Common myeloid progenitor, CD34-positive (primary cell): ENCODE measurements at regions of chr11 and their contacts with region 1.

Region 1: DNA sequence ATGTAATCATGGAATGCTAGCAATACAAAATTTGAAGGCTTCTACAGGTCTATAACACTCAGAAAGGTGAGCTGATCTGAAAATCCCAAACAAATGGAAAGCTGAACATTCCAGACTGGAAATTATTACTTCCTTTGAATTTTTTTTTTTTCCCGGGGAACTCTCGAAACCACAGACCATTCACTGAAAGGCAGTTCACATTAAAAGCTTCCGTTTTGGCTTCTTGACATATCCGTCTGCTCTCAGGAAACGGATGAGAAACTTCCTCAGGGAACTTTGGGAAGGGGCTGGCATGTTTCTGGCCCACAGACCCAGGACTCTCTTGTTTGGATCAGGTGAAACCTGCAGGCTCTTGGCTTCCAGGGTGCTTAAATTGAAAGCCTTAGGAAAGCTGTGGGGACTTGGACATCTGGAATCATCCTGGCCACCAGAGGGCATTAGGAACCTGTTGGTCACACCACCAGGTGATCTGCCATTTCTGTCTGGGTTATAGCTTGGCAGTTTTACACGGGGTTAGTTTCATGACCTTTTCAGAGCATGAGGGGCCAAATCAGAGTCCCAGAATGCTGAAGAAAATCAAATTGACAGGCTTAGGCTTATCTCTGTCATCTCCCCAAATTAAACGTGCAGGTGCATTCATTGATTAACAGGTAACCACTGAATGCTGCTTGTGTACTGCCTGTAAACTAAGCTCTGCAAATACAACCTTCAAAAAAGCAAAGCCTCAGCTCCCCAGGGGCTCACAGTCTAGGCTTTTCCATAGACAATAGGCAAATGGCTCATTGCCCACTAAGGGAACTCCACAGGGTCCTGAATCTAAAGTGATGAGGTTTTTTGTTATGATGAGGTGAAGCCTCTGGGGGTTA is 22.7 kb upstream of the GRAMD1B start:
- DNase-seq: peak; percentile 76 to 85 (median 78)
- H3K4me3 ChIP-seq: peak overlapping the region in 1 of 7 experiments; percentile 2
- H3K27ac ChIP-seq: no peak overlapping the region
- H3K4me1 ChIP-seq: peaks cover 0 to 10% (median 3%) of the 10 kb centered on the region in 4 experiments
- H3K27me3 ChIP-seq: peaks cover 0 to 7% (median 0%) of the 10 kb centered on the region in 5 experiments

Region 2: DNA sequence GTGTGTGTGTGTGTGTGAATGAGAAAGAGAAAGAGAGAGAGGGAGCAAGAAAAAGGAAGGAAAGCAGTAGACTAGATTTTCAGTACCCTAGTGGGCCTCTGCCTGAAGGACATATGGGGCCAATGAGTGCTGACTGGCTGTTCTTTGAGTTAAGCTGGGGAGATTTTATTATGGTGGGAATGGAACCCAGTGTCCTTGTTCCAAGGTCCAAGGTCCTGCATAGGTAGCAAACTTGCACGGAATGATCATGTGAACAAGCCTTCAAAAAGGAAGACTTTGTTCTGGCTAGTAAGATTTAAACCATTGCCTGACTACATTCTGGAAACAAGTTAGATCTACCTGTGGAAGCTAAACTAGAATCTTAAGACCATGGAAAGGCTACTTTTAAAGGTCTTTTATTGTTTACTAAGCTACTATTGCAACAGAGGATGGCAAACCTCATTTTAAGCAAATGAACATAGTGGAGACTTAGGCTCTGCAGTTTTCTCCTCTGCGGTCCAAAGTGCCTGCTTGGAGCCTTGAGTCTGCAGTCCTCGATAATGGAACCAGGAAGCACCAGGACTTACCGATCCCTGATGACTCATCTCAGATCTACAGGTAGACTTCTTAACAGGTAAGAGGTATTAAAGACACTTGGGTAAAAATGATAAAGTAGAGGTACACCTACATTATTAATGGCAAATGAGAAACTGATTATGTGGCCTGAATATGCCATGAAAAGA is 12.5 kb after region 1 on chr11:
- CTCF ChIA-PET with region 1: interaction called, 31 read pairs
- POLR2A ChIA-PET with region 1: no interaction called
- DNase-seq: no peak
- H3K4me3 ChIP-seq: no peak overlapping the region
- H3K27ac ChIP-seq: no peak overlapping the region
- H3K4me1 ChIP-seq: peaks cover 0 to 16% (median 8%) of the 10 kb centered on the region in 4 experiments
- H3K27me3 ChIP-seq: peaks cover 0 to 2% (median 0%) of the 10 kb centered on the region in 5 experiments

Region 3: GRCh38 chr11:123430721-123431497 is 23.5 kb after region 1 on chr11:
- CTCF ChIA-PET with region 1: interaction called, 17 read pairs
- POLR2A ChIA-PET with region 1: no interaction called
- DNase-seq: peak; percentile 69 to 89 (median 87)
- H3K4me3 ChIP-seq: peak overlapping the region; percentile 57 to 86 (median 75)
- H3K27ac ChIP-seq: peak overlapping the region in 1 of 2 experiments; percentile 38
- H3K4me1 ChIP-seq: peaks cover 3 to 32% (median 19%) of the 10 kb centered on the region in 4 experiments
- H3K27me3 ChIP-seq: no peaks in the 10 kb centered on the region

Region 4: DNA sequence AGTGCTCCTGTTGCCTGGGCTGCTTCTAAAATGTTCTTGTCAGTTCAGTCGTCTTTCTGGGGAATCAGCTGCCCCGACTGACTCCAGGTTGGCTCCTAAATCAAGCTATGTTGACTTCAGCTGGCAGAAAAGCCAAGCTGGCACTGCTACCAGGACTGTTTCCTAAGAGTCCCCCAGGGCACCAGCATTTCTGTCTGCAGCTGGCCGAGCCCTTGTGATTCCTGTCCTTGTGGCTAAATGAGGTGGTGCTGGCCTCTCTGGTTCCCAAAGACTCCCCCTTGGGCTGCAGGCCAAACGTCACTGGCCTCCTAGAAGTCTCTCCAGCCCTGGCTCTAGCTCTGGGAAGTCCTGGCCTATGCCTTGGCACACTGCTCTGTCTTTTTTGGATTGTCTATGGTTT is 53.8 kb after region 1 on chr11:
- CTCF ChIA-PET with region 1: interaction called, 12 read pairs
- POLR2A ChIA-PET with region 1: no interaction called
- DNase-seq: no peak
- H3K4me3 ChIP-seq: no peak overlapping the region
- H3K27ac ChIP-seq: no peak overlapping the region
- H3K4me1 ChIP-seq: peaks cover 5 to 17% (median 12%) of the 10 kb centered on the region in 4 experiments
- H3K27me3 ChIP-seq: no peaks in the 10 kb centered on the region

Region 5: DNA sequence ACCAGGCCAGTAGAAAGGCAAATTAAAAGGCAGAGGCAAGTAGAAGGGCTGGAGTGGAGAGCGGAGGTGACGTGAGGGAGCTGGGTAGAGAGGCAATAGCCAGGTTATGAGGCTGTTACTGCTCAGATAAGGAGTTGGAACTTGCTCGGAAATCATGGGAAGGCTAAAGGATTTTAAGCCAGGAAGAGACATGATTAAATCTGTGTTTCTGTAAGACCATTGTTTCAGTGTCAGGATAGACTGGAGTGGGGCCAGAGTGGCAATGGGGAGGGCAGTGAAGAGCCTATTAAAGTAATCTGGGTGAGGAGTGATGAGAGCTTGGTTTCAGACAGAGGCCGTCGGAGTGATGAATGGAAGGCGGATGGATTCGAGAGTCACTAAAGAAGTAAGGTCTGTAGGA is 61.7 kb after region 1 on chr11:
- CTCF ChIA-PET with region 1: interaction called, 190 read pairs
- POLR2A ChIA-PET with region 1: no interaction called
- DNase-seq: no peak
- H3K4me3 ChIP-seq: no peak overlapping the region
- H3K27ac ChIP-seq: no peak overlapping the region
- H3K4me1 ChIP-seq: peaks cover 0 to 1% (median 0%) of the 10 kb centered on the region in 4 experiments
- H3K27me3 ChIP-seq: no peaks in the 10 kb centered on the region

Region 6: DNA sequence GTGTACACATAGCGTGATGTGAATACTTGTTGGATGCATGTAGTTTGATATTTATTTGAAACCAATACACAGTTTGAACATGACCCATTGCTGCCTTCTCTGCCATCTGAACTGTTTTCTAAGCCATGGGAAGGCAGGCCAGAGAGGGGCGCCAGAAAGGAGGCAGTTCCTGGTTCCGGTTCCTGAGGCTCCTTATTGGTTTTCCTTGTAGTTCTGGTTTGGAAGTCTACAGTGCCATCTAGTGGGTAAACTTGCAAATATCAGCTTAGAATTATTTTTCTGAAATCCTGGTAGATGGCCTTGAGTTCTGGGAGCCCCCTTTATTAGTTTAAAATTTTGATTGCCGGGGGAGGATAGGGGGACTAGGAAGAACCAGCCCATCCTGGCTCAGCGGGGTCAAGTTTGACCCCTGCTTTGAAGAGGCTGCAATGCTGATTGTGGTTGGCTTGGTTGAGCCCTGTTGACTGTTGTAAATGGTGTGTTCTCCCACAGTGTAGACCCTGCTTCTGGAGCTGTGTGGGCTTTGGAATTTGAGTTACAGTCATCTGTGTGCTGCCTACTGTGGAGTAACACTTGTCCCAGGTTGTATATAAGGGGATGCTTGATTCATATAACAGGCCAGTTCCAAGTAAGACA is 71.1 kb after region 1 on chr11:
- CTCF ChIA-PET with region 1: interaction called, 190 read pairs
- POLR2A ChIA-PET with region 1: no interaction called
- DNase-seq: peak; percentile 63 to 75 (median 74)
- H3K4me3 ChIP-seq: peak overlapping the region in 3 of 7 experiments; percentile 8 to 48 (median 23)
- H3K27ac ChIP-seq: no peak overlapping the region
- H3K4me1 ChIP-seq: peaks cover 12 to 68% (median 12%) of the 10 kb centered on the region in 4 experiments
- H3K27me3 ChIP-seq: no peaks in the 10 kb centered on the region

Region 7: DNA sequence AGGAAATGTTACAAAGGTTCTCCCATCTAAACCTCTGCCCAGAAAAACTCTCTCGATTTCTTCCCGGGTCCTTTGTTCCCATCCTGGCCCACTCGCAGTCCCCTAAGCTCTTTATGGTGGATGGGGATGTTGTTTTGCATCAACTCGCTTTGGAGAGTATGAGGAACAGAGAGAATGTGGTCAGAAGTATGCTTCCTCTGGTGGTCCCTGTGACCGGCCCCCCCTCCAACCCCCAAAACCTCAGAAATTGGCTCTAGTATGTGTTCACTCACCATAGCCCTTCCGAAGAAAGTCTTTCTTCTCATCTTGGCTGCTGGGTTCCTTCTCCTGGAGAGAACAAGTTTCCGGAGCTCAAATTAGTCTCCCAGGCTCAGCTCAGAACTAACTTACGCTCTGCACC is 77.1 kb after region 1 on chr11:
- CTCF ChIA-PET with region 1: interaction called, 190 read pairs
- POLR2A ChIA-PET with region 1: no interaction called
- DNase-seq: peak; percentile 35 to 90 (median 83)
- H3K4me3 ChIP-seq: peak overlapping the region in 2 of 7 experiments; percentile 26 to 33
- H3K27ac ChIP-seq: no peak overlapping the region
- H3K4me1 ChIP-seq: peaks cover 22 to 61% (median 25%) of the 10 kb centered on the region in 4 experiments
- H3K27me3 ChIP-seq: peaks cover 0 to 6% (median 0%) of the 10 kb centered on the region in 5 experiments